Caco-2 (cell line): ENCODE measurements at regions of chr6 and their contacts with region 1.

Region 1: GRCh38 chr6:12331956-12332749 is 42.0 kb downstream of the EDN1 start:
- DNase-seq: peak; percentile 86 to 90
- H3K4me3 ChIP-seq: no peak overlapping the region
- H3K4me3 Mint-ChIP-seq: peak overlapping the region; percentile 34
- H3K27ac Mint-ChIP-seq: peak overlapping the region; percentile 91
- H3K4me1 ChIP-seq: peaks cover 44% of the 10 kb centered on the region
- H3K4me1 Mint-ChIP-seq: peaks cover 54% of the 10 kb centered on the region
- H3K27me3 ChIP-seq: no peaks in the 10 kb centered on the region; the same call in 1 of the 2 replicates
- H3K27me3 Mint-ChIP-seq: no peaks in the 10 kb centered on the region
- CTCF ChIP-seq: no peak

Region 2: GRCh38 chr6:12343440-12344162 is 11.4 kb after region 1 on chr6:
- CTCF ChIA-PET with region 1: no interaction called
- POLR2A ChIA-PET with region 1: interaction called, 6 read pairs
- intact Hi-C with region 1: loop called (anchors 1 kb)
- DNase-seq: peak; percentile 62 to 82
- H3K4me3 ChIP-seq: no peak overlapping the region
- H3K4me3 Mint-ChIP-seq: peak overlapping the region; percentile 3
- H3K27ac Mint-ChIP-seq: peak overlapping the region; percentile 89
- H3K4me1 ChIP-seq: peaks cover 29% of the 10 kb centered on the region
- H3K4me1 Mint-ChIP-seq: peaks cover 38% of the 10 kb centered on the region
- H3K27me3 ChIP-seq: no peaks in the 10 kb centered on the region
- H3K27me3 Mint-ChIP-seq: peaks cover 2% of the 10 kb centered on the region
- CTCF ChIP-seq: no peak

Region 3: GRCh38 chr6:12348530-12349511 is 16.7 kb after region 1 on chr6:
- CTCF ChIA-PET with region 1: no interaction called
- POLR2A ChIA-PET with region 1: interaction called, 6 read pairs
- intact Hi-C with region 1: loop called (anchors 1 kb)
- DNase-seq: peak; percentile 73 to 83
- H3K4me3 ChIP-seq: no peak overlapping the region
- H3K4me3 Mint-ChIP-seq: peak overlapping the region; percentile 55
- H3K27ac Mint-ChIP-seq: peak overlapping the region; percentile 96
- H3K4me1 ChIP-seq: peaks cover 20% of the 10 kb centered on the region
- H3K4me1 Mint-ChIP-seq: peaks cover 34% of the 10 kb centered on the region
- H3K27me3 ChIP-seq: no peaks in the 10 kb centered on the region
- H3K27me3 Mint-ChIP-seq: peaks cover 2% of the 10 kb centered on the region
- CTCF ChIP-seq: no peak